Activated CD4-positive, alpha-beta memory T cell treated with anti-CD3 and anti-CD28 coated beads for 36 hours (primary cell): ENCODE measurements at regions of chr17 and their contacts with region 1.

Region 1: DNA sequence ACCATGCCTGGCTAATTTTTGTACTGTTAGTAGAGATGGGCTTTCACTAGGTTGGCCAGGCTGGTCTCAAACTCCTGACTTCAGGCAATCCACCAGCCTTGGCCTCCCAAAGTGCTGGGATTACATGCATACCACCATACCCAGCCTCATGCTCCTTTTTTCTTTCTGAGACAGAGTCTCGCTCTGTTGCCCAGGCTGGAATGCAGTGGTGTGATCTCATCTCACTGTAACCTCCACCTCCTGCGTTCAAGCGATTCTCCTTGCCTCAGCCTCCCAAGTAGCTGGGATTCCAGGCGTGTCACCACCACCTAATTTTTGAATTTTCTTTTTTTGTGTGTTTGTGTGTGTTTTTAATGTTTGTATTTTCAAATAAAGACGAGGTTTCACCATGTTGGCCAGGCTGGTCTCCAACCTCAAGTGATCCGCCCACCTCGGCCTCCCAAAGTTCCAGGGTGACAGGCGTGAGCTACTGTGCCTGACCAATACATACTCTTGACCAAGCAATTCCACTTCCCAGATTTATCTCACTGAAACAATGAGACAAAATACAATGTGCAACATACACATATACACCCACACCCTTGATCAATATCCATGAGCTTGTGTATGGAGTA is 5.0 kb downstream of the GRB2 start:
- DNase-seq: no peak
- H3K4me3 Mint-ChIP-seq: no peak overlapping the region
- H3K27ac Mint-ChIP-seq: no peak overlapping the region
- H3K4me1 Mint-ChIP-seq: peaks cover 57% of the 10 kb centered on the region
- H3K27me3 Mint-ChIP-seq: no peaks in the 10 kb centered on the region

Region 2: GRCh38 chr17:74873038-74873873 is 527.2 kb before region 1 on chr17:
- CTCF ChIA-PET with region 1: no interaction called
- POLR2A ChIA-PET with region 1: no interaction called
- intact Hi-C with region 1: no loop called
- DNase-seq: peak; percentile 100
- H3K4me3 Mint-ChIP-seq: peak overlapping the region; percentile 80
- H3K27ac Mint-ChIP-seq: peak overlapping the region; percentile 93
- H3K4me1 Mint-ChIP-seq: peaks cover 25% of the 10 kb centered on the region
- H3K27me3 Mint-ChIP-seq: no peaks in the 10 kb centered on the region

Region 3: DNA sequence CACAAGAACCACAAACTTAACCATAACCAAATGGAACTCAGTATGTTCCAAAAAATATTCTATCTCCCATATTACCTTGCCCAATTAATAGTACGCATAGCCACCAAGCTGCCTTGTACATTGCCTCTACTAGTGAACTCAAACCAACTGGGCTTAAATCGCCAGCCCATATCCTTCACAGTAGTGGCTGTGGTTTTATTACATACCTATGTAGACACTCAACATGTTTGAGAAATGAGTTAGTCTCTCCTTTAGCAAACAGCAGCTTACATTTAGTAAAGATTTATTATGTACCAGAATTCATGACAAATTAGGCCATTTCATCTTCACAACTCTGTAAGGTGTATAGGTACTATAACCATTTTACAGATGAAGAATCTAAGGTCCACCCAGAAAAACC is 36.4 kb before region 1 on chr17:
- CTCF ChIA-PET with region 1: no interaction called
- POLR2A ChIA-PET with region 1: interaction called, 3 read pairs
- intact Hi-C with region 1: loop called (anchors 1 kb)
- DNase-seq: no peak
- H3K4me3 Mint-ChIP-seq: no peak overlapping the region
- H3K27ac Mint-ChIP-seq: peak overlapping the region; percentile 34
- H3K4me1 Mint-ChIP-seq: peaks cover 95% of the 10 kb centered on the region
- H3K27me3 Mint-ChIP-seq: no peaks in the 10 kb centered on the region

Region 4: GRCh38 chr17:75370286-75370915 is 30.0 kb before region 1 on chr17:
- CTCF ChIA-PET with region 1: interaction called, 3 read pairs
- POLR2A ChIA-PET with region 1: interaction called, 3 read pairs
- intact Hi-C with region 1: loop called (anchors 1 kb)
- DNase-seq: no peak
- H3K4me3 Mint-ChIP-seq: no peak overlapping the region
- H3K27ac Mint-ChIP-seq: no peak overlapping the region
- H3K4me1 Mint-ChIP-seq: peaks cover 82% of the 10 kb centered on the region
- H3K27me3 Mint-ChIP-seq: no peaks in the 10 kb centered on the region